Activated naive CD4-positive, alpha-beta T cell treated with anti-CD3 and anti-CD28 coated beads for 36 hours (primary cell): ENCODE measurements at regions of chr6 and their contacts with region 1.

Region 1: DNA sequence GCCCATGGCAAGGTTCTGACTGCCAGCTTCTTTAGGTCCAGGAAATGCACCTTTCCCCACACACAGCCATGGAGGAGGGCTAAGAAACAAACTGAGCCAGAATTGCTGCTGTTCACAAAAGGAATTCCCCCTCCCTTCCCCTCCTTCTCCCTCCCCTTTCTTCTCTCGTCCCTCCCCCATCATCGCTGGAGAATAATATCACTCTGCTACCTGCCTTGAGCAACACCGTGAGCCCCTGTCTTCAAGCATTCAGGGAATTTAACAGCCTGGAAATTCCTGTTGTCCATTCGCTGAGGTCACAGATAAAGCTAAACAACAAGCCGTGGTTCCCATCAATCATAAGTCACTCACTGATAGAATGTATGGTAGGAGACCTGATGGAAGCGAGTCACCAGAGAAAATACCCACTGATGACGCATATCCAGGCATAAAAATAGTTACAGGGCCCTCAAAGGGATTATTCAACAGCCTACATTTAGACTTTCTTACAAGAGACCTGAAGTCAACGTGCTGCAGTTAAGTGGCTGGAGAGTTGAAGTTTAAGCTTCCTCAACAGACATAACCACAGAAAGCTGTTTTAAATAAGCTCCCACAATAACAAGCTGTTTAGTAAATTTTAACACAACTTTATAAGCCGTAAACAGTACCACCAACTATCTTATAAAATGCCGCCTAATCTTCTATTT is 59.7 kb downstream of the HIVEP2 start:
- DNase-seq: peak; percentile 66
- H3K4me3 Mint-ChIP-seq: peak overlapping the region; percentile 90
- H3K27ac Mint-ChIP-seq: peak overlapping the region; percentile 99
- H3K4me1 Mint-ChIP-seq: peaks cover 87% of the 10 kb centered on the region
- H3K27me3 Mint-ChIP-seq: no peaks in the 10 kb centered on the region

Region 2: GRCh38 chr6:142850679-142851423 is 34.5 kb before region 1 on chr6:
- CTCF ChIA-PET with region 1: interaction called, 6 read pairs
- intact Hi-C with region 1: loop called (anchors 1 kb)
- DNase-seq: peak; percentile 62
- H3K4me3 Mint-ChIP-seq: peak overlapping the region; percentile 39
- H3K27ac Mint-ChIP-seq: peak overlapping the region; percentile 91
- H3K4me1 Mint-ChIP-seq: peaks cover 97% of the 10 kb centered on the region
- H3K27me3 Mint-ChIP-seq: no peaks in the 10 kb centered on the region

Region 3: DNA sequence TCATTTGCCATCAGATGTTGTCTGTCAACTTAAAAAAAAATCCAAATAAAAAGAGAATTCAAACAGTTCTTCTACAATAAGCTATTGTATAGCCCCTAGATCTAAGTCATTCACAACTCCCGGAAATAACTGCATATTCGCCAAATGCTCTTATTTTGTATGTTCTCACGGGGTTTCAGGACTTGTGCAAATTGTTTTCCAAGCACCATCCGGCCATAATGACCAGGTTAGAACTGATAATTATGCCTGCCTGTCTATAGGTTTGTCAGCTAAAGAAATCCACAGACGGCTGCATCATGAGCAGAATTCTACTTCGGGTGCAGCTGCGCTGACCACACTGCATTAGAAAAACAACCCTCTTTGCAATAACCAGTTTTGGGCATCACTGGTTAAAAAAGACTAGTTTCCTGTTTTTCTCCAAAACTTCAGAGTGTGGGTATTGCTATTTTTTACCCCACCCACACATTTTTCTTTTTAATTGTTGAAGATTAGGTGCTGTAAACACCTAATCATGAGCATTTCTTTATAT is 28.0 kb before region 1 on chr6:
- CTCF ChIA-PET with region 1: interaction called, 4 read pairs
- intact Hi-C with region 1: loop called (anchors 1 kb)
- DNase-seq: no peak
- H3K4me3 Mint-ChIP-seq: peak overlapping the region; percentile 68
- H3K27ac Mint-ChIP-seq: peak overlapping the region; percentile 69
- H3K4me1 Mint-ChIP-seq: peaks cover 95% of the 10 kb centered on the region
- H3K27me3 Mint-ChIP-seq: no peaks in the 10 kb centered on the region

Region 4: GRCh38 chr6:142871910-142872331 is 13.4 kb before region 1 on chr6:
- CTCF ChIA-PET with region 1: interaction called, 8 read pairs
- intact Hi-C with region 1: loop called (anchors 1 kb)
- DNase-seq: peak; percentile 83
- H3K4me3 Mint-ChIP-seq: peak overlapping the region; percentile 33
- H3K27ac Mint-ChIP-seq: peak overlapping the region; percentile 84
- H3K4me1 Mint-ChIP-seq: peaks cover 83% of the 10 kb centered on the region
- H3K27me3 Mint-ChIP-seq: no peaks in the 10 kb centered on the region

Region 5: DNA sequence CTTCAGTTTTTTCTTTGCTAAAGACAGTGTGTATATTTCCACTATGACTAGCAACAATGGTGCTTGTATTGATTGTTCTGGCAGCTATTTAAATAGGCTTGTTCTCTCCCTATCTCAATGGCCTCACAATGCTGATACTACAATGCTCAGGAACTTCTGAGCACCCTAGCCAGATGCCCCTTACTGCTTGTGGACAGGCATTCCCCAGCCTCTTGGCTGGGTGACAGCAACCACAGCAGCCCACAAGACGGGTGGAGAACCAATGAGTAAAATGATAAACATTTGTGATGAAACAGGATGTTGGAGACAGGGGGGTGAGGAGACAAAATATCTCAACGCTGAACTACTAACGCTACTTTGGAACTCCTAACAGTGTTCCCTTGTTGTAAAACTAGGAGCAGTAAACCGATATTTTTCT is 17.3 kb after region 1 on chr6:
- CTCF ChIA-PET with region 1: interaction called, 16 read pairs
- intact Hi-C with region 1: loop called (anchors 1 kb)
- DNase-seq: peak; percentile 81
- H3K4me3 Mint-ChIP-seq: peak overlapping the region; percentile 55
- H3K27ac Mint-ChIP-seq: peak overlapping the region; percentile 91
- H3K4me1 Mint-ChIP-seq: peaks cover 61% of the 10 kb centered on the region
- H3K27me3 Mint-ChIP-seq: no peaks in the 10 kb centered on the region

Region 6: DNA sequence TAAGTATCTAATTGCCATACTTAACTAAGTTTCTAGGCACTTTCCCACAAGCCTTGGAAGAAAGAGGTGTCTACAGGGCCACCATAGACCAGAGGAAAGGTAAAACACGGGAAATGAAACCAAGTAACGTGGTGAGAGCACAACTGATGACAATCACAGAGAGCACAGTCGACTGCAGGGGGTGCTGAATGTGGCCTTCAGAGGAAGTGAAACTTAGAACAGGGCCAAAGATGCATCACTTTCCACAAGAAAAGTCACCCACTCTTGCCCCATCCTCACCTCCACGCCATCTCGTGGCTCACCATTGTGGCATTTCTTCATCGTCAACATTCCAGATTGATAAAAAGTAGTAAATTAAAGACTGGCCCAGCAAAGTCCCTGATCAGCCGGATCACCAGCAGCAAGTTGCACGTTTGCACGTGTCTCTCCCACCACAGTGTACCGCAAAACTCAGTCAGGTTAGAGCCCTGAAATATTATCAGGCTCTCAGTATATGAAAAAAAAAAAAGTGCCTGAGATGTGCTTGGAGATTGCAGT is 28.3 kb after region 1 on chr6:
- CTCF ChIA-PET with region 1: interaction called, 7 read pairs
- intact Hi-C with region 1: loop called (anchors 1 kb)
- DNase-seq: peak; percentile 82
- H3K4me3 Mint-ChIP-seq: peak overlapping the region; percentile 64
- H3K27ac Mint-ChIP-seq: peak overlapping the region; percentile 96
- H3K4me1 Mint-ChIP-seq: peaks cover 84% of the 10 kb centered on the region
- H3K27me3 Mint-ChIP-seq: no peaks in the 10 kb centered on the region

Region 7: DNA sequence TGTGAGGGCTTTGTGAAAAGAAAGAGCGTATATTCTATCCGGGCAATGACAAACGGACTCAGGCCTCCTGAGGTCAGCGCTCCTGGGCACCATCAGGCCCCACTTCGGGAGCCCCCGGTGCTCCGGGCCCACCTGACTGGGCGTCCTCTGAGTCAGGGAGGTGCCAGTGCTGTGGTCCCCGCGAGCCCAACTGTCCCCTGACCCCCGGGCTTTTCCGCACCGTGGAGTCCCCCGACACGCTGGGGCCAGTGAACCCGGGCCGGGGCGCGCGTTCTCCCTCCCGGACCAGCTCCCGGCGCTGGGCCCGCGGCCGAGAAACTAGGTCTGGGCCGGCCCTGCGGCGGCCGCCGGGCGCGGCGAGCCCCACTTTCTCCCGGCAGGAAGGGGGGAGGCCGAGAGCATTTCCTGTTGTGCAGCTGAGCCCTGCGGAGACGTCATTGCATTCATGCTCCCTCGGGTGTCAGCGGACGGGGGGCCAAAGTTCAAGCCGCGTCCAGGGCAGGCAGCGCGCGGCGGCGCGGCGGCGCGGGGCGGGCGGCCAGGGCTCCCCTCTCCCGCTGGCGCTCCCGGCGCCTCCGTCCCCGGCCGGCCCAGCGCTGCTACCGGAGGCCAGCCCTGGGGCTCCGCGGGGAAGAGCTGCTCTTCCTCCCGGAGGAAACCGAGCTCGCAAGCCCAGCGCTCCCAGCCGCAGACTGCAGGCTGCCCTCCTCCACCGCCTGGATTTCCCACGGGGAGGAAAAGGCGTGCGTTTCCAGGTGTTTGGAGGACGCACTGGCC is 41.4 kb after region 1 on chr6:
- CTCF ChIA-PET with region 1: interaction called, 6 read pairs
- intact Hi-C with region 1: loop called (anchors 1 kb)
- DNase-seq: peak; percentile 80
- H3K4me3 Mint-ChIP-seq: peak overlapping the region; percentile 86
- H3K27ac Mint-ChIP-seq: peak overlapping the region; percentile 97
- H3K4me1 Mint-ChIP-seq: peaks cover 53% of the 10 kb centered on the region
- H3K27me3 Mint-ChIP-seq: no peaks in the 10 kb centered on the region